ENCODE measurements at regions of chrX and their contacts with region 1.

Region 1: GRCh38 chrX:31213941-31214340 is 142.1 kb upstream of the FTHL17 start:
- DNase-seq: peak; percentile 54
- H3K4me3 ChIP-seq: no peak overlapping the region
- H3K27ac ChIP-seq: no peak overlapping the region
- H3K4me1 ChIP-seq: peaks cover 42% of the 10 kb centered on the region
- CTCF ChIP-seq: peak; percentile 77

Region 2: GRCh38 chrX:30690330-30690729 is 523.6 kb before region 1 on chrX:
- CTCF ChIA-PET with region 1: no interaction called
- POLR2A ChIA-PET with region 1: no interaction called
- intact Hi-C with region 1: no loop called
- DNase-seq: no peak
- H3K4me3 ChIP-seq: no peak overlapping the region
- H3K27ac ChIP-seq: no peak overlapping the region
- H3K4me1 ChIP-seq: no peaks in the 10 kb centered on the region
- CTCF ChIP-seq: no peak

Region 3: DNA sequence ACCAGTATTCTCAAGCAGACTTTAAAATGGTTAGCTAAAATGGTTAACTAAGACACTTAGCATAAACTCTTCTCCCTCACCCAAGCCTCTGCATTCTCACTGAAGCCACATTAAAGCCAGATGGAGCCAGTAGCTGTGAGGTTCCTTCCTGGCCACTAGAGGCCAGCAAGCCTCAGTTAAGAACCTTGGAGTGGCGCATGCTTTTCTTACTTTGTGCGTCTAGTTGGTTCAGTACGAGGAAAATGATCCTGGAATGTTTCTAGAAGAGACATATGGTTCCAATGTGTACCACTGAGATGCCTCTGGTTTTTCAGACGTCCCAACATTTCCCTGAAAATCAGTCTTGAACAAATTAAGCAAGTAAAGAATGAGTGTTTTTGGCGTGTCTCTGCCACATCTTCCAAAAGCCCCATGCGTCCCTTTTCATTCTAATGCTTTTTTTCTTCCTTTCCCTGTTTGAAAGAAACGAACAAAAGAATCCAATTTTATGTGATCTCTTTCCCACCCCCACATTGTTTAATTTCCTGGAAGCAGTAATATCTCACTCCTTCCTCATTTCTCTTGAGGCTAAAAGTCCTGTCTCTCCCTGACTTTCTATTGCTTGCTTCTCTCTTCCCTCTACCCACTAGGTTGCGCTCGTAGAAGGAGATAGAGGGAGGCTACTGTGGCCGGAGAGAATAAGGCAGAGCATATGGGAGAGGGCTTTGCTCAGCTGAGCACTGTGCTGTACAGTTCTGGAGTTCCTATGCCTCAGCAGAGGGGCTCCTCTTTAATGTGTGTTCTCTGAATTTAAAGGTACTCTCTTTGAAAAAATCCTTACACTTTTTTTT is 242.0 kb before region 1 on chrX:
- CTCF ChIA-PET with region 1: no interaction called
- POLR2A ChIA-PET with region 1: no interaction called
- intact Hi-C with region 1: no loop called
- DNase-seq: peak; percentile 54
- H3K4me3 ChIP-seq: peak overlapping the region; percentile 43
- H3K27ac ChIP-seq: no peak overlapping the region
- H3K4me1 ChIP-seq: no peaks in the 10 kb centered on the region
- CTCF ChIP-seq: peak; percentile 79

Region 4: GRCh38 chrX:31036895-31037294 is 177.0 kb before region 1 on chrX:
- CTCF ChIA-PET with region 1: interaction called, 14 read pairs
- POLR2A ChIA-PET with region 1: interaction called, 9 read pairs
- intact Hi-C with region 1: loop called (anchors 1 kb)
- DNase-seq: peak; percentile 54
- H3K4me3 ChIP-seq: no peak overlapping the region
- H3K27ac ChIP-seq: no peak overlapping the region
- H3K4me1 ChIP-seq: peaks cover 24% of the 10 kb centered on the region
- CTCF ChIP-seq: peak; percentile 77

Region 5: DNA sequence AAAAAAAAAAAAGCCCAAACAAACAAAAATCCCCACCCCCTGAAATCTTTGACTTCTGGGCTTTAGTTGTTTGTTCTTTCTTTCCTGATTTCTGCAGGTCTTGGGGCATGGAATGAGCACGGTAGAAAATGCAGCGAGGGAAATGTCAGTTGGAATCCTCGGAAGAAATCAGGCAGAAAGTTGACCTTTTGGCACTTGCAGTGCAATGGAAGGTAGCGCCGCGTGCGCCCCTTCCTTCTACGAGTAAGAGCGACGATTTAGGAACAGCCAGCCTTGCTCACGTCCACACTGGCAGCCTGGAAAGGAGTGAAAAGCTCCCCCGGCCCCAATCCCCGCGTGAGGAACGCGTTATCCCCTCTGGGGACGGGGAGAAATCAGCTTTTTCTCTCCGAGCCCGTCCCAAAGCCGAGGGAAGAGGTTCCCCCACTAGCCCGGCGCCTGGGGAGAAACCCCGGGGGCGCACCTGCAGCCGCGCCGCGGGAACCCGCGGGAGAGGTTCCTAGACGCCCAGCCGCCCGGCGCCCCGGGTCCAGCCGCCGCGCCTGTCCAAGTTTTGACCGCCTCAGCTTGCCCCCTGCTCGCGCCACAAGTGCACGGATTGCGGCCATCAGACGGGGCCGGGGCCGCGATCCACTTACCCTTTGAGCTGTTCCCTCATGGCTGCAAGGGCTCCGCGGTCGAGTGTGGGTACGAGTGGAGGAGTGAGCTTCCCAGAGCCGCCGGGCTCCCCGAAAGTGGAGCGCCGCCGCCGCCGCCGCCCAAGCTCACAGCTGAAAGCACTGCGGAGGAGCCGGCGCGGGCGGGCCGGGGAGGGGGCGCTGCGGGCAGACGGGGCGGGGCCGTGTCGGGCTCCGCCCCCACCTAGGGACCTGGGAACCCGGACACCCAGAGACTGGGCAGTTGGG is 52.5 kb after region 1 on chrX:
- CTCF ChIA-PET with region 1: interaction called, 3 read pairs
- POLR2A ChIA-PET with region 1: interaction called, 4 read pairs
- intact Hi-C with region 1: loop called (anchors 2 kb)
- DNase-seq: peak; percentile 68
- H3K4me3 ChIP-seq: peak overlapping the region; percentile 96
- H3K27ac ChIP-seq: peak overlapping the region; percentile 35
- H3K4me1 ChIP-seq: peaks cover 19% of the 10 kb centered on the region
- CTCF ChIP-seq: no peak

Region 6: GRCh38 chrX:31293409-31293808 is 79.5 kb after region 1 on chrX:
- CTCF ChIA-PET with region 1: no interaction called
- POLR2A ChIA-PET with region 1: interaction called, 5 read pairs
- intact Hi-C with region 1: loop called (anchors 1 kb)
- DNase-seq: peak; percentile 41
- H3K4me3 ChIP-seq: no peak overlapping the region
- H3K27ac ChIP-seq: no peak overlapping the region
- H3K4me1 ChIP-seq: no peaks in the 10 kb centered on the region
- CTCF ChIP-seq: peak; percentile 77

Region 7: DNA sequence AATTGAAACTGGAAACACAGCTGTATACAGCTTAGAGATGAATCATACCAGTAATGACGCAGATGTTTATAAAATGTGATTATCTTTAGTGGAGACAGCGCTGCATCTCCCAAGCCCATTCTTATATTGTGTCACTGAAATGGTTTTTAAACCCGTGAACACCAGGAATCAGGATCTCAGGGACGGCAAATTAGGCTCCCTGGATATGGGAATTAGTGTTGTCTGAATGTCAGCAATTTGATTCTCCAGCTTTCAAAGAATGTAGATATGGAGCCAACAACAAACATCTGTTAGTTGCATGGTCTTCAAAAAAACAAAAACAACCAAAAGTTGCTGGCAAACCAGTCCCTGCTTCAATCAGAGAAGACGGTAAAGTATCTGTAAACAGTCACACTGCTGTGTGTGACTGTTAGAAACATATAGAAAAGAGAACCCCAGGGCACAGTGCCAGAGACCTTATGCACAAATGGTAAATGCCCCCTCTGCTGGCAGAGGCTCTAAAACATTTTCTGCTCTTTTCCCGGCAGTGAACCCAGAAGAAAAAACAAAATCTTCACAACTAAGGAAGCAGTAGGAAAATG is 209.8 kb after region 1 on chrX:
- CTCF ChIA-PET with region 1: no interaction called
- POLR2A ChIA-PET with region 1: interaction called, 3 read pairs
- intact Hi-C with region 1: loop called (anchors 1 kb)
- DNase-seq: peak; percentile 32
- H3K4me3 ChIP-seq: no peak overlapping the region
- H3K27ac ChIP-seq: no peak overlapping the region
- H3K4me1 ChIP-seq: no peaks in the 10 kb centered on the region
- CTCF ChIP-seq: peak; percentile 64

Region 8: GRCh38 chrX:31658360-31658759 is 444.4 kb after region 1 on chrX:
- CTCF ChIA-PET with region 1: no interaction called
- POLR2A ChIA-PET with region 1: no interaction called
- intact Hi-C with region 1: loop called (anchors 5 kb)
- DNase-seq: peak; percentile 31
- H3K4me3 ChIP-seq: no peak overlapping the region
- H3K27ac ChIP-seq: no peak overlapping the region
- H3K4me1 ChIP-seq: no peaks in the 10 kb centered on the region
- CTCF ChIP-seq: peak; percentile 81

Region 9: DNA sequence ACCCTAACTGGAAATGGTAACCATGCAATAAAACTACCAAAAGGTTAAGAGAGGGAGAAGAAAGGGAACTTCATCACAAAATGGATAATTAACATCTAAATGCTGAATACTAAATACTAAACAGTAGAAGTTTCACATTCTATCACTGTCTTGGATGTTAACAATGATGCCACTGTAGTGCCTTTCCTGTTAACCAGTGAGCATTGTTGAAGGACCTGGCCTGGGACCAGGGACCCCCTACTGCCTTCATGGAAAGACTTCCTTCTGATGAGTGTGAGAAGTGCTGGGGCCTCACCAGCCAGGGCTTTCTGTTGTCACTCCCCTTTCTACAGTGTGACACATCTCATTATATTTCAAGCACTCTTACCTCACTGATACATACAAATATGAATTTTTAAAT is 597.2 kb after region 1 on chrX:
- CTCF ChIA-PET with region 1: no interaction called
- POLR2A ChIA-PET with region 1: no interaction called
- intact Hi-C with region 1: loop called (anchors 5 kb)
- DNase-seq: no peak
- H3K4me3 ChIP-seq: no peak overlapping the region
- H3K27ac ChIP-seq: no peak overlapping the region
- H3K4me1 ChIP-seq: no peaks in the 10 kb centered on the region
- CTCF ChIP-seq: no peak

Measured in OCI-LY7 (cell line).